Heart right ventricle (tissue), 16 donors: ENCODE measurements at regions of chr12 and their contacts with region 1.

Region 1: DNA sequence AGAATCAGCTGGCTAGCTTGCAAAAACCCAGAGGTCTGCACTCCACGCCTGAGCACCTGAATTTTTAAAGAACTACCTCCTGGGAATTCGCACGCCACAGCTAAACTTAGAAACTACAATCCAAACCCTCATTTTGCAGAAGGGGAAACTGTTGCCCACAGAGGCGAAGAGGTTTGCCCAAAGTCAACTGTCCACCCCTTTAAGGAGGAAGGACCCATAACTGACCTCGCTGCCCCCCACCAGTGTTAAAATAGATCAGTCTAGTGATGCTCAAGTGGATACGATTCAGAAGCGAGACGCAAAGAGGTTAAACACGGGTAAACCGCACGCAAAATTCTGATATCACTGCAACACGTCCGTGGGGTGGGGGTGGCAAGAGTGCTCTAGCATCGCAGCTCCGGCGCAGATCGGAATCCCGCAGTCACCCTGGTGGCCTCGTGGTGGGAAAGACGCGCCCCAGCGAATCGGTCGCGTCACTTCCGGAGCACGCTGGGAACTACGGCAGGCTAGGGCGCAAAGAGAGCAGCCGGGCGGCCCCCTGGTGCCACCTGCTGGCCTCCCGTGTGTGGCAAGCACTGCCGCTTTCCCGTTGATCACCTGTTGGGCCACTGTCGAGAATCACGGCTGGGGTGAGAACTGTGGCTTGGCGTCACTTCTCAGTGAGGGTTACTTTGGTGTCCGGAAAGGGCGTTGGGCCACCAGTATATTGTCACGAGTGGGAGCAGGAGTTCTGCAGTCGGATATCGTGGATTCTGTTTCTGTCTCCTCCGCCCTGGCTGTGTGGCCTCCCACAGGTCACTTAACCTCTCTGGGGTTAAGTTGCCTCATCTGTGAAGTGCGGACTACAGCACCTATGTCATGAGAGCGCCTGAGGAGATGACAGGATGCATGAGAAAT is at the start of gene ALKBH2:
- DNase-seq: peak; percentile 93 to 94
- ATAC-seq: peak; percentile 70 to 84 (median 76)
- H3K4me3 ChIP-seq: peak within 1 kb of the TSS; percentile 29 to 66 (median 60)
- H3K27ac ChIP-seq: peak within 1 kb of the TSS in 9 of 10 donors; percentile 28 to 78 (median 64)
- H3K4me1 ChIP-seq: peaks cover 7 to 35% (median 23%) of the 10 kb centered on the region in 9 donors
- H3K27me3 ChIP-seq: no peaks in the 10 kb centered on the region
- CTCF ChIP-seq: peak; percentile 98 to 100 (median 99)
- total RNA-seq, gene ALKBH2: 5.4 to 11.7 (median 7.1) TPM

Region 2: DNA sequence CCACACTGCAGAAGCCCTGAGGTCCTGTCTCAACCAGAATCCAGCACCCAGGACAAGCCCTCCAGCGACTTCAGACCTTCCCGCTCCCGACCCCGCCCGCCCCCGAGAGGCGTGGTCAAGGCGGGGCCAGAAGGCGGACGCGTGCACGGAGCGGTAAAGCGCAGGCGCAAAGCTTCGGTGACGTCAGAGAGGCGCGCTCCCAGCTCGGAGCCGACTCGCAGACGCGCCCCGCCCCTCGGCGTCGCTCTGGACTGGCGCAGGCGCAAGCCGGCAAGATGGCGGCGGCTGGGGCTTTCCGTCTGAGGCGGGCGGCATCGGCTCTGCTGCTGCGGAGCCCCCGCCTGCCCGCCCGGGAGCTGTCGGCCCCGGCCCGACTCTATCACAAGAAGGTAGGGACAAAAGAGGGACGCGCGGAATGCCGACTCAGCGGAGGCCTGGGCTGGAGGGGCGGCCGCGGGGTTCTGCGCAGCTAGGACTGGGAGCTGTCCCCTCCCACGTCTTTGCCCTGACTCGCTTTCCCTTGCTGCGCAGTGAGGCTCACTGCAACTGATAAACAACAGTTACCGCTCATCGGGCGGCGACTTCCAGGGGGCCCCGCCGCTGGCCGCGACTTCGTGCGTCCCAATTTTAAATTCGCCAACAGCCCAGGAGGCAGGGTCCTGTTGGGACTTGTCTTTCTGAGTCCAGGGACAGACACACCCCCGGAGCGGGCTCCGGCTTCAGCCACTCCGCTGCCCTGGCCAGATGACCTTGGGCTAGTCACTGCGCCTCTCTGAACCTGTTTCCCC is 530.7 kb before region 1 on chr12 and contains the start of gene ISCU:
- intact Hi-C with region 1: loop called in 7 of 10 experiments (anchors 2 to 10 kb)
- DNase-seq: peak; percentile 98 to 99
- ATAC-seq: peak; percentile 88 to 95 (median 92)
- H3K4me3 ChIP-seq: peak within 1 kb of the TSS; percentile 57 to 99 (median 90)
- H3K27ac ChIP-seq: peak within 1 kb of the TSS; percentile 78 to 97 (median 94)
- H3K4me1 ChIP-seq: peaks cover 5 to 80% (median 67%) of the 10 kb centered on the region in 9 donors
- H3K27me3 ChIP-seq: no peaks in the 10 kb centered on the region
- CTCF ChIP-seq: no peak
- total RNA-seq, gene ISCU: 321 to 630 (median 522) TPM

Region 3: DNA sequence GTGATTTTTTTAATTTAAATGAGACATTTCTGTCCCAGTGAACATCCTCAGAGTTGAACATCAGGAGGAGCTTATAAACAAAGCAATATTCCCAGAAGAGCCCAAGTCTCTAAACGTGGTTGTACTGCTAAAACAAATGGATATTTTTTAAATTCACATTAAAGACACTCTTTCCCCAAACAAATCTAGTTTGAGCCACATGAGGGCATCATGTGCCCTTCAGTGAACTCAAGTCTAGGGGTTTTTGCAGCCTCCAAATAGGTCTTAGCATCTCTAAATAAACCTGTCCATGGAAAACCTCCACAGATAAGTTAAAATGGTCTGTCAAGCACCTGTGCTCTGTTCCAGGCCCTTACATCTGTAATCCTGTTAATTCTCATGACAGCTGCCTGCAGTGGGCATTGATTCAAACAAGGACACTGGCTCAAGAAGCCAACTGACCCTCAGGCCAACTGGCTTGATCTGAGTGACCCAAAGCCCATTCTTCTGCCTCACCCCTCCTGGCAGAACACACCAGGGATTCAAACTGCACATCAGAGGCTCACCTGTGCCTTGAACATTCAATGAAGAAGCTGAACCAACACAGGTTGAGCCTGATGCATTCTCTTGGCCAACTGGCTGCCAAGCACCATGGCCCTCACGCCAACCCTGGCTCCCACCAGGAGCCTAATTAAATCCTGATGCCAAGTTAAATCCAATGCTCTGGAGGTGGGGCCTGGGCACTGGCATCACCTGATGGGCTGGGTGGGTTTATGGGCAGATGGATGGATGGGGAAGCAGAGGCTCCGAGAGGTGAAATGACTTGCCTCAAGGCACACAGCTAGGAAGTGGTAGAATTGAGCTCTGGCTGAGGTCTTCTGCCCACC is 522.3 kb before region 1 on chr12:
- intact Hi-C with region 1: loop called in 2 of 10 experiments (anchors 5 to 10 kb)
- DNase-seq: no peak
- ATAC-seq: peak in 2 of 8 donors; percentile 12 to 27
- H3K4me3 ChIP-seq: no peak overlapping the region
- H3K27ac ChIP-seq: peak overlapping the region in 1 of 10 donors; percentile 15
- H3K4me1 ChIP-seq: peaks cover 0 to 30% (median 6%) of the 10 kb centered on the region in 9 donors
- H3K27me3 ChIP-seq: no peaks in the 10 kb centered on the region
- CTCF ChIP-seq: peak in 8 of 9 donors; percentile 6 to 52 (median 40)

Region 4: DNA sequence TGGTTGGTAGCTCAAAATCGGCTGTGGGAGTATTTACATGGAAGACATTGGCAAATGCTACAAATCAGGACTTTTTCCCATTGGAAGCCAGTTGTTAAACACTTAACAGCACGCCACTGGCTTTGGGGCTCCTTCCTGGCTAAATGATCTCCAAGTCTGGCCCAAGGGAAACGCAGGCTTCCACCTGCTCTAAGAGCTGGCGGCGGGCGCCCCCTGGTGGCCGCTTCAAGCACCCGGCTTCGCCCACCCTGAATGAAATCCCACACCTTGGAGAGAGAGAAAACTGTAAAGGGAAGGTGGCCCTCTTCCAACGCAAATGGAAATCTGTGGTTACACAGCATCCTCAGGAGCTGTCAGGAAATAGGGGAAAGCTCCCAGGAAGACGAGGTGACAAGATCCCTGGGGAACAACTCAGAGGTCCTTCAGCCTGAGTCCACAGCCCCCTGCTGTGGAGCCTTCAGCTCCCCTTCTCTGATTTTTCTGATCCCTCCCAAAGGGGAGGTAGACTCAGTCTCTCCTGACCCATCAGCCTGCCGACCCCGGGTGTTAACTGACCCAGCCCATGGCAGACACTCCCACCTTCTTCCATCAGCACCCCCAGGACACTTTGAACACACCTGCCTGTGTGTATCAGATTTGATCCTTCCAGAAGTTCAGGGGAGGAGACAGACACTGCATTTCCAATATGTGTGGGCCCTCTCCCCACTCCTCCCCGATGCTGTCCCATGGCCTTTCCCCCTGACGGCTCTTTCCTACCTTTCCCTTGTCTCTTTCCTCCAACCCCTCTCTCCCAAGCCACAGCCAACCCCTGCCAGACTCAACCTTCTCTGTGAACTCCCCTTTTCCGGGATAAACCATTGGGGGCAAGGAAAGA is 475.0 kb before region 1 on chr12:
- intact Hi-C with region 1: loop called in 1 of 10 experiments (anchors 10 kb)
- DNase-seq: peak; percentile 72 to 82
- ATAC-seq: peak; percentile 72 to 90 (median 84)
- H3K4me3 ChIP-seq: no peak overlapping the region
- H3K27ac ChIP-seq: peak overlapping the region in 1 of 10 donors; percentile 71
- H3K4me1 ChIP-seq: peaks cover 0 to 66% (median 14%) of the 10 kb centered on the region in 9 donors
- H3K27me3 ChIP-seq: no peaks in the 10 kb centered on the region
- CTCF ChIP-seq: peak; percentile 97 to 99 (median 98)

Region 5: GRCh38 chr12:108664338-108665258 is 428.7 kb before region 1 on chr12:
- intact Hi-C with region 1: loop called in 4 of 10 experiments (anchors 1 to 10 kb)
- DNase-seq: peak; percentile 53 to 89
- ATAC-seq: peak; percentile 88 to 96 (median 92)
- H3K4me3 ChIP-seq: peak overlapping the region in 1 of 10 donors; percentile 14
- H3K27ac ChIP-seq: peak overlapping the region; percentile 36 to 86 (median 78)
- H3K4me1 ChIP-seq: peaks cover 7 to 71% (median 56%) of the 10 kb centered on the region in 9 donors
- H3K27me3 ChIP-seq: no peaks in the 10 kb centered on the region
- CTCF ChIP-seq: peak; percentile 79 to 99 (median 95)

Region 6: DNA sequence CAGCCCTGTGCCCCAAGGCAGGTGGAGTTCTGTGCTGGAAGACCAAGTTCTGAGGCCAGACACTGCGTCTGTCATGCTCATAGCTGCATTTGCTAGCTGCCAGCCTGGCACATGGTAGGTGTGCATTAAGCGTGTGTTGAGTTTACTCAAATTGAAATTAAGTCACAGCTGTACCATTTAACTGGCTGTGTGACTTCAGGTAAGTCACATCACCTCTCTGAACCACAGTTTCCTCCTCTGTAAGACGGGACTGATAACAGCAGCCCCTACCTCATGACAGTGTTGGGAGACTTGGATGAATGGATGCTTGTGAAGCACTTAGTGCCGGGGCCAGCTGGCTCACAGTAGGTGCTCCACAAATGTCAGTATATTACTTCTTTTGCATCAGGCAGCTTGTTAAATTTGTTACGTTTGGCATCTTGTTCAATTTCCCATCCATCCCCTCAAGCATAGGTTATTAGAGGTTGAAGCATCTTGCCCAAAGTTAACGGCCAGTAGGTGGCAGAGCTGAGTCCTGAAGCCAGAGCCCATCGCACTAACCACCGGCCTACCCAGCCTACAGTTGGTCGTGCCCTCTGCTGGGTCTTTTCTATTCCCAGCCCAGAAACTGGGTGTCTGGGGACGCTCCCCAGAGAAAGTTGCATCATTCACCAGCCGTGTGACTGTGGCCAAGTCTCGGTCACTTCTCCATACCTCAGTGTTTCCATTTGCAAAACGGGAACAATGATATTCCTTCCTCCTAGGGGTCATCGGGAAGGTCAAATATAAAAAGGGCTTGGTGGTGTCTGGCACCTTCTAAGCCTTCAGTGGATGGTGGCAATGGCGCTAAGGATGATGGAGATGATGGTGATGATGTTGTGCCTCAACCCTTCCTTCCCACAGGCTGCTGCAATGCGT is 208.9 kb before region 1 on chr12:
- intact Hi-C with region 1: loop called in 2 of 10 experiments (anchors 10 kb)
- DNase-seq: peak; percentile 36 to 38
- ATAC-seq: peak in 7 of 8 donors; percentile 44 to 61 (median 51)
- H3K4me3 ChIP-seq: no peak overlapping the region
- H3K27ac ChIP-seq: no peak overlapping the region
- H3K4me1 ChIP-seq: peaks cover 0 to 11% (median 0%) of the 10 kb centered on the region in 9 donors
- H3K27me3 ChIP-seq: no peaks in the 10 kb centered on the region
- CTCF ChIP-seq: peak; percentile 11 to 68 (median 54)

Region 7: GRCh38 chr12:108950991-108951739 is 142.1 kb before region 1 on chr12:
- intact Hi-C with region 1: loop called in 2 of 10 experiments (anchors 5 to 10 kb)
- DNase-seq: peak; percentile 58 to 63
- ATAC-seq: peak; percentile 53 to 81 (median 64)
- H3K4me3 ChIP-seq: peak overlapping the region in 1 of 10 donors; percentile 20
- H3K27ac ChIP-seq: peak overlapping the region in 1 of 10 donors; percentile 39
- H3K4me1 ChIP-seq: peaks cover 0 to 26% (median 12%) of the 10 kb centered on the region in 9 donors
- H3K27me3 ChIP-seq: peaks cover 0 to 3% (median 0%) of the 10 kb centered on the region in 7 donors
- CTCF ChIP-seq: peak; percentile 77 to 96 (median 90)